ENCODE measurements at regions of chr17 and their contacts with region 1.

Region 1: GRCh38 chr17:79915850-79916430 is 76.7 kb upstream of the CBX4 start:
- DNase-seq: peak in 3 of 10 donors; percentile 49 to 90 (median 84)

Region 2: DNA sequence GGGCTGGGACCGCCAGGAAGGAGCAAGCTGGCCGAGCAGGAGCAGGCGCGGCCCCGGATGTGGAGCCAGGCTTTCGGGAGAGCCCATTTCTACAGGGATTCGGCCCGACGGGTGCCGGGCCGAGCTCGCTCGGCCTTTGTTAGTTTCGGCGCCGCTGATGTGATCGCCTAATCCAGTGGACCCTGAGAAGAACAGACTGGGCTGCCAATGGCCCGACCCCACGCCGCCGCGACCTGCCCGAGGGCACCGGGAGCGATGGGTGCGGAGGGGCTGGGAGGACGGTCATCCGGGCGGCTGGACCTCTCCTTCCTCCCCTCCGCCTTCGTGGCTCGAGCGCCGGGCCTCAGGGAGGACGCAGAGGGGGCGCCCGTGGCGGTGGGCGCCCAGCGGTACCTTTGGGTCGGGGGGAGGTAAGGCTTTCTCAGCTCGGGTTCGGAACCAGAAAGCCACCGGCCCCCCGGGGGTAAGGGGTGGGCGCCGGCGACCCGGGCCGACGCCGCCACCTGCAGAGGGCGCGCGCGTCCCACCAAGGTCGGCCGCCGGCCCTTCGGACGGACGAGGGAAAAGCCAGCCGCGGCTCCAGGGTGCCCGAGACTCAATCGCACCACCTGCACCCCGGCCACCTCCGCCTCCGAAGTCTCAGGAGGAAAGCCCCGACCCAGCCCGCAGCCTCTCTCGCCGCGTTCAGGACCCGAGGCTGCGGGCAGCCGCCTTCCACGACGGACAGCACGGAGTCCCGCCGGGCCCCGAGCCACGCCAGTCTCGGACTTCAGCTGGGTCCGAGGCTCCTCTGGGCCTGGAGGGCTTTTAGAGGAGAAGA is 126.2 kb before region 1 on chr17:
- intact Hi-C with region 1: loop called (anchors 5 kb)
- DNase-seq: peak in 5 of 10 donors; percentile 48 to 92 (median 78)

Measured in posterior cingulate gyrus (tissue), 11 donors.